ENCODE measurements at regions of chr7 and their contacts with region 1.

Region 1: GRCh38 chr7:5677538-5678294 is 103.7 kb downstream of the RNF216 start:
- DNase-seq: peak; percentile 78
- ATAC-seq: peak; percentile 92
- H3K4me3 ChIP-seq: no peak overlapping the region
- H3K27ac ChIP-seq: peak overlapping the region; percentile 28; the same call in 1 of the 2 replicates
- H3K4me1 ChIP-seq: peaks cover 23% of the 10 kb centered on the region
- H3K27me3 ChIP-seq: no peaks in the 10 kb centered on the region
- CTCF ChIP-seq: peak; percentile 86
- POLR2A ChIP-seq: no peak
- RAD21 ChIP-seq: peak; percentile 78

Region 2: GRCh38 chr7:5231811-5232484 is 445.8 kb before region 1 on chr7:
- CTCF ChIA-PET with region 1: no interaction called
- POLR2A ChIA-PET with region 1: no interaction called
- dilution Hi-C with region 1: no loop called
- in situ Hi-C with region 1: loop called (anchors 25 kb)
- intact Hi-C with region 1: no loop called
- DNase-seq: no peak
- ATAC-seq: no peak
- H3K4me3 ChIP-seq: no peak overlapping the region
- H3K27ac ChIP-seq: no peak overlapping the region
- H3K4me1 ChIP-seq: no peaks in the 10 kb centered on the region
- H3K27me3 ChIP-seq: no peaks in the 10 kb centered on the region
- CTCF ChIP-seq: no peak
- POLR2A ChIP-seq: no peak
- RAD21 ChIP-seq: no peak

Region 3: GRCh38 chr7:5494683-5495561 is 182.8 kb before region 1 on chr7:
- CTCF ChIA-PET with region 1: no interaction called
- POLR2A ChIA-PET with region 1: no interaction called
- dilution Hi-C with region 1: no loop called
- in situ Hi-C with region 1: no loop called
- intact Hi-C with region 1: loop called (anchors 1 kb)
- DNase-seq: peak; percentile 69
- ATAC-seq: peak; percentile 93
- H3K4me3 ChIP-seq: no peak overlapping the region
- H3K27ac ChIP-seq: no peak overlapping the region; the same call in 1 of the 2 replicates
- H3K4me1 ChIP-seq: peaks cover 6% of the 10 kb centered on the region
- H3K27me3 ChIP-seq: no peaks in the 10 kb centered on the region
- CTCF ChIP-seq: peak; percentile 97
- POLR2A ChIP-seq: peak; percentile 44; the same call in 1 of the 2 replicates
- RAD21 ChIP-seq: peak; percentile 98

Region 4: DNA sequence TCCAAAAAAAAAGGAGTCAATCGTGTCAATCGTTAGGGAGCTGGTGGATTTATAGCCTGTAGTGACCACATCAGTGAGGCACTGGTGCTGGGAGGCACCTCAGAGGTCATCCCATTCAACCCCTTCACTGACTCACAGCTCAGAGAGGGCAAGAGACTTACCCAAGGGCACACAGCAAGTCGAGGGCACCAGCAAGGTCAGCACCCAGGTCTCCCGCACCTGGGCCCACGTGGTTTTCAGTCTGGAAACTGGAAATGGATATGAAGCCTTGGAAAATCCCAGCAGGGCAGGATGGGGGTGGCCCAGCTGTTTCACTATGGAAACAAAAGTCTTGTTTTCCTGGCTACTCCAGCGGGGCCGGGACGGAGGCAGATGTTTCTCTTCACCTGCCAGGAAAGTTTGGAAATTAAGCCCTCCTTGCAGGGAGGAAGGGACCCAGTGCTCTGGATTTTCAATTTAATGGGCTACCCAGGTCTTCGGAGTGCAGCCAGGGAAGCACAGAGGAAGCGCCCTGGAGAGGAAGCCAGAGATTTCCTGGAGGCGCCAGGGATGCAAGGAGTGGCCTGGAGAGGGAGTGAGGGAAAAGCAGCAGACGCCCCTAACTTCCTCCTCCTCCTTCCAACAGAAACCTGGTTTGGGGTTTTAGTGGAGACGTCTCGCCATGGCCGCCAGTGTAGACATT is 96.9 kb before region 1 on chr7:
- CTCF ChIA-PET with region 1: no interaction called
- POLR2A ChIA-PET with region 1: no interaction called
- dilution Hi-C with region 1: no loop called
- in situ Hi-C with region 1: no loop called
- intact Hi-C with region 1: no loop called
- DNase-seq: no peak
- ATAC-seq: peak; percentile 75
- H3K4me3 ChIP-seq: no peak overlapping the region
- H3K27ac ChIP-seq: no peak overlapping the region
- H3K4me1 ChIP-seq: peaks cover 1% of the 10 kb centered on the region; the same call in 1 of the 2 replicates
- H3K27me3 ChIP-seq: peaks cover 10% of the 10 kb centered on the region
- CTCF ChIP-seq: no peak
- POLR2A ChIP-seq: no peak
- RAD21 ChIP-seq: no peak

Region 5: GRCh38 chr7:5629941-5630340 is 47.8 kb before region 1 on chr7:
- CTCF ChIA-PET with region 1: no interaction called
- POLR2A ChIA-PET with region 1: no interaction called
- dilution Hi-C with region 1: loop called (anchors 10 kb)
- in situ Hi-C with region 1: no loop called
- intact Hi-C with region 1: loop called (anchors 5 kb)
- DNase-seq: peak; percentile 74
- ATAC-seq: peak; percentile 39
- H3K4me3 ChIP-seq: no peak overlapping the region
- H3K27ac ChIP-seq: no peak overlapping the region
- H3K4me1 ChIP-seq: peaks cover 36% of the 10 kb centered on the region
- H3K27me3 ChIP-seq: no peaks in the 10 kb centered on the region
- CTCF ChIP-seq: no peak
- POLR2A ChIP-seq: no peak
- RAD21 ChIP-seq: no peak

Region 6: GRCh38 chr7:5694912-5695726 is 17.4 kb after region 1 on chr7:
- CTCF ChIA-PET with region 1: interaction called, 19 read pairs
- POLR2A ChIA-PET with region 1: no interaction called
- dilution Hi-C with region 1: no loop called
- in situ Hi-C with region 1: no loop called
- intact Hi-C with region 1: no loop called
- DNase-seq: peak; percentile 89
- ATAC-seq: peak; percentile 21
- H3K4me3 ChIP-seq: peak overlapping the region; percentile 34
- H3K27ac ChIP-seq: peak overlapping the region; percentile 98
- H3K4me1 ChIP-seq: peaks cover 59% of the 10 kb centered on the region
- H3K27me3 ChIP-seq: no peaks in the 10 kb centered on the region
- CTCF ChIP-seq: no peak
- POLR2A ChIP-seq: peak; percentile 85
- RAD21 ChIP-seq: 0 out of 2 replicates have a peak, but pooled peaks have one; percentile 9

Region 7: DNA sequence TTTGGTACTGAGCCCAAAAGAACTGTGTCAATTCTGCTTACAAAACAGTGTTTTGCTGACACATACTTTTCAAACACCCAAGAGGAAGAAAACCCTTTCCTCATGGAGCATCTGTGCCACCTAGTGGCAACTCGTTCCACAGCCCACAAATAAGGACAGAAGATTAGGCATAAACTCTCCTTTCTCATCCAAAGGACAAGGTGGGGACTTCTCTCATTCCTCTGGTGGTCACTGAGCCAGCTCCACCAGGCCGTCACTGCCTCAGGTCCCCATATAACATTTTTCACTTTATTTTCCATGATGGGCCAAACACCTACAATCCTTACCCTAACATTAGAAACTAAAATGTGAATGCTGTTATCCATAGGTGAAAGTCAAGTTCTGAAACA is 26.8 kb after region 1 on chr7:
- CTCF ChIA-PET with region 1: interaction called, 3 read pairs
- POLR2A ChIA-PET with region 1: no interaction called
- dilution Hi-C with region 1: no loop called
- in situ Hi-C with region 1: no loop called
- intact Hi-C with region 1: loop called (anchors 1 kb)
- DNase-seq: peak; percentile 84
- ATAC-seq: peak; percentile 81
- H3K4me3 ChIP-seq: no peak overlapping the region
- H3K27ac ChIP-seq: no peak overlapping the region
- H3K4me1 ChIP-seq: peaks cover 20% of the 10 kb centered on the region
- H3K27me3 ChIP-seq: no peaks in the 10 kb centered on the region
- CTCF ChIP-seq: peak; percentile 93
- POLR2A ChIP-seq: no peak
- RAD21 ChIP-seq: peak; percentile 91

Region 8: DNA sequence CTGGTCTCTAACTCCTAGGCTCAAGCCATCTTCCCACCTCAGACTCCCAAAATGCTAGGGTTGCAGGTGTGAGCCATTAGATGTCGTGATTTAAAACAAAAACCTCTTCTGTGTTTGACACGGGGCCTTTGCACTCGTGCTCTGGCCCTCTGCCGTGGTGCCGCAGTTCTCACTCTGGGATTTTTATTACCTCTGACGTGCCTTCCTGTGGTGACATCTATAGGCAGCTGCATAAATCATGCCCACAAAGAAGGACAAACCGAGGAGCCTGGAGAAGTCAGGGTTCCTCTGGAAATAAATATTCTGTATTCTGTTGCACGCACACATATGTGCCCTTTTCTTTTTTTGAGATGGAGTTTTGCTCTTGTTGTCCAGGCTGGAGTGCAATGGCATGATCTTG is 177.0 kb after region 1 on chr7:
- CTCF ChIA-PET with region 1: no interaction called
- POLR2A ChIA-PET with region 1: no interaction called
- dilution Hi-C with region 1: no loop called
- in situ Hi-C with region 1: no loop called
- intact Hi-C with region 1: no loop called
- DNase-seq: no peak
- ATAC-seq: no peak
- H3K4me3 ChIP-seq: no peak overlapping the region
- H3K27ac ChIP-seq: no peak overlapping the region
- H3K4me1 ChIP-seq: no peaks in the 10 kb centered on the region
- H3K27me3 ChIP-seq: no peaks in the 10 kb centered on the region
- CTCF ChIP-seq: no peak
- POLR2A ChIP-seq: no peak
- RAD21 ChIP-seq: no peak

Region 9: GRCh38 chr7:6008668-6009611 is 331.2 kb after region 1 on chr7 and contains the starts of genes AIMP2 and PMS2:
- CTCF ChIA-PET with region 1: no interaction called
- POLR2A ChIA-PET with region 1: no interaction called
- dilution Hi-C with region 1: no loop called
- in situ Hi-C with region 1: no loop called
- intact Hi-C with region 1: no loop called
- DNase-seq: peak; percentile 98
- ATAC-seq: peak; percentile 97
- H3K4me3 ChIP-seq: peak within 1 kb of the TSS; percentile 82
- H3K27ac ChIP-seq: peak within 1 kb of the TSS; percentile 73
- H3K4me1 ChIP-seq: no peaks in the 10 kb centered on the region
- H3K27me3 ChIP-seq: no peaks in the 10 kb centered on the region
- CTCF ChIP-seq: 0 out of 2 replicates have a peak, but pooled peaks have one; percentile 1
- POLR2A ChIP-seq: peak; percentile 85
- RAD21 ChIP-seq: no peak
- total RNA-seq, gene AIMP2: 46.9 and 58.6 TPM in 2 replicates
- total RNA-seq, gene PMS2: 14.3 and 16.9 TPM in 2 replicates

Region 10: DNA sequence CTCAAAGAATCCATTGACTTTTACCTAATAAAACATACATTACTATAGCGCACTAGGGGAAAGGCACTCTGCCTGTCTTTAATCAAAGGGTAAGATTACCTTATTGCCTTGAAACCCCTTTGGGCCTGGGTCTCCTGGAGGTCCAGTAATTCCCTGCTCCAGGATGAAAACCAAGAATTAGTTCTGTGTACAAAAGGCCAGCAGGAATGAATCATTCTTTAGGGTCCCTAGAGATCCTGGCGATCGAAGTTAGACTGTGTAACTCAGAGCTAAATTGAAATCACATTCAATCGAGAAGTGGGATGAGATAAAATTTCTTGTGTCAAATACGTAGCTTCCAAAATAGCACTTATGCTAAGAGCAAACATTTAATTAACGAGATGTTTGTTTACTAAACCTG is 1828.2 kb after region 1 on chr7:
- CTCF ChIA-PET with region 1: no interaction called
- POLR2A ChIA-PET with region 1: no interaction called
- dilution Hi-C with region 1: no loop called
- in situ Hi-C with region 1: no loop called
- intact Hi-C with region 1: no loop called
- DNase-seq: no peak
- ATAC-seq: no peak
- H3K4me3 ChIP-seq: no peak overlapping the region
- H3K27ac ChIP-seq: no peak overlapping the region
- H3K4me1 ChIP-seq: no peaks in the 10 kb centered on the region
- H3K27me3 ChIP-seq: no peaks in the 10 kb centered on the region
- CTCF ChIP-seq: no peak
- POLR2A ChIP-seq: no peak
- RAD21 ChIP-seq: no peak

Measured in IMR-90 (cell line).